Left ventricle myocardium inferior (tissue), 1 donor: ENCODE measurements at regions of chr5 and their contacts with region 1.

Region 1: DNA sequence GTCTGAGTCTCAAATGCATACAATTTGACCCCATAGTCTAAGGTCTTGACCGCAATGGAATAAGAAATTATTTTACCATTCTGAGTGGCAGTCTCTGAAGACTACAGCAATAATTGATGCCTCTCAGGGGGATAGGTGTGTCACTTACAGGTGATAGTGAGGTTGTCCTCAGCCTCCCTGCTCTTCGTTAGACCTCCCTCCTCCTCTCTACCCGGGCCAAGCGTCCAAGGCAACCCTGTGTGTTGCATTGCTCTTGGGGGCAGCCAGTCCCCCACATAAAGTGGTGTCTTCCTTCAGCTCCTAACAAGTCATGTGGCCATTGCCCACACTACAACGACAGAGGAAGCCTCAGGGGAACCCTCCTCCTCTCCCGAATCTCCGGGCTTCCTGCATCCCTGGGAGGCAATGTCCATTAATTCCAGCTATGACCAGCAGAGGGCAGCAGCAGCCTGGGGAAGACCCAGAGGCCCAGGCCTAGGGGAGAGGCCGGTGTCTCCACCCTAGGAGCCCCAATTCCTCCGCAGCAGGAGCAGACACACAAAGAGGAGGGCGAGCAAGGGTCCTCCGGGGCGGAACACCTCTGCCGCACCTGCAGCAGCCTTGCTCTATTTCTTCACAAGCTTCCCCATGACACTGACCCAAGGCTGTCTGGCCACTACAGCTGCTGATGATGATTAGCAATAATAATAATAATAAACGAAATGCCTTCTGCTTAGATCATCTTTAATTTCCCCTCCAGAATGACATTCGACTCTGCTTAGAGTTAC is 134.8 kb downstream of the KCNIP1 start:
- DNase-seq: peak; percentile 50
- H3K4me3 ChIP-seq: no peak overlapping the region
- H3K27ac ChIP-seq: no peak overlapping the region
- H3K4me1 ChIP-seq: peaks cover 16% of the 10 kb centered on the region
- H3K27me3 ChIP-seq: no peaks in the 10 kb centered on the region
- CTCF ChIP-seq: peak; percentile 93

Region 2: DNA sequence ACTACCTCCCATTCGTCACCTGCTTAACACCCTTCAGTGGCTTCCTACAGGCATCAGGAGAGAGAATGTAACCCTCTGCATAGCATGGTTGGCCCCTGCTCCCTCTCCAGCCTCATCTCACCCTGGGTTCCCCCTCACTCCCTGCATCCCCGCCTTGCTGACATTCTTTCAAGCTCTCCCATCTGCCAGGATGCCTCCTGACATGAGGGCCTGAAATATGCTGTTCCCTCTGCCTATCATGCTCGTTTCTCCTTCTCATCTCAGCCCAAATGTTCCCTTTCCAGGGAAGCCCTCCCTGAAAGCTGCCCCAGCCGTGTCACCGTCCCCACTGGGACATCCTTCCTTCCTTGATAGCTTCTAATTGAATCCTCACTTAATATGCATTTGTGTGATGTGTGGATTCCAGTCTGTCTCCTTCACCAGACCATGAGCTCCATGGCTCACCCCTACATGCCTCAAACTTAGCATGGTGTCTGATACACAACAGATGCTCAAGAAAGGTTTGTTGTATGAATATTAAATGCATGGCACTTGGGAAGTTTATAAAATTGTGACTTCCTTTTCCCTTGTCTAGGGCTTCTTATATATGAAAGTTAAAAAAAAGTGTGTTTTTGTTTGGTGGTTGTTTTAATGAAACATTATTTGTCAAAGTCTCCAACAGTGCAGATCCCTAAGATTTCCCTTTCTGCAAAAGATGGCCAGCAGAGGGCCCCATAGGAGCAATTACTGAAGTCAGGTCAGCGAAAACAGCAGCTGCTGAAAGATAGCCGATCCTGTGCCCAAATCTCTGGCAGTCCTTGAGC is 413.1 kb before region 1 on chr5:
- intact Hi-C with region 1: loop called (anchors 10 kb)
- DNase-seq: peak; percentile 64
- H3K4me3 ChIP-seq: no peak overlapping the region
- H3K27ac ChIP-seq: no peak overlapping the region
- H3K4me1 ChIP-seq: peaks cover 11% of the 10 kb centered on the region
- H3K27me3 ChIP-seq: no peaks in the 10 kb centered on the region
- CTCF ChIP-seq: peak; percentile 85